HepG2 (cell line): ENCODE measurements at regions of chr2 and their contacts with region 1.

Region 1: GRCh38 chr2:82268446-82268845 is 1963.9 kb upstream of the LRRTM1 start:
- DNase-seq: no peak
- ATAC-seq: no peak
- H3K4me3 ChIP-seq: no peak overlapping the region
- H3K27ac ChIP-seq: no peak overlapping the region
- H3K4me1 ChIP-seq: no peaks in the 10 kb centered on the region
- H3K27me3 ChIP-seq: no peaks in the 10 kb centered on the region
- CTCF ChIP-seq: no peak
- EP300 ChIP-seq: no peak
- POLR2A ChIP-seq: no peak
- RAD21 ChIP-seq: no peak

Region 2: GRCh38 chr2:82109418-82109817 is 159.0 kb before region 1 on chr2:
- CTCF ChIA-PET with region 1: no interaction called
- POLR2A ChIA-PET with region 1: no interaction called
- in situ Hi-C with region 1: no loop called
- intact Hi-C with region 1: no loop called
- DNase-seq: no peak
- ATAC-seq: no peak
- H3K4me3 ChIP-seq: no peak overlapping the region
- H3K27ac ChIP-seq: no peak overlapping the region
- H3K4me1 ChIP-seq: no peaks in the 10 kb centered on the region
- H3K27me3 ChIP-seq: no peaks in the 10 kb centered on the region
- CTCF ChIP-seq: no peak
- EP300 ChIP-seq: no peak
- POLR2A ChIP-seq: no peak
- RAD21 ChIP-seq: no peak

Region 3: DNA sequence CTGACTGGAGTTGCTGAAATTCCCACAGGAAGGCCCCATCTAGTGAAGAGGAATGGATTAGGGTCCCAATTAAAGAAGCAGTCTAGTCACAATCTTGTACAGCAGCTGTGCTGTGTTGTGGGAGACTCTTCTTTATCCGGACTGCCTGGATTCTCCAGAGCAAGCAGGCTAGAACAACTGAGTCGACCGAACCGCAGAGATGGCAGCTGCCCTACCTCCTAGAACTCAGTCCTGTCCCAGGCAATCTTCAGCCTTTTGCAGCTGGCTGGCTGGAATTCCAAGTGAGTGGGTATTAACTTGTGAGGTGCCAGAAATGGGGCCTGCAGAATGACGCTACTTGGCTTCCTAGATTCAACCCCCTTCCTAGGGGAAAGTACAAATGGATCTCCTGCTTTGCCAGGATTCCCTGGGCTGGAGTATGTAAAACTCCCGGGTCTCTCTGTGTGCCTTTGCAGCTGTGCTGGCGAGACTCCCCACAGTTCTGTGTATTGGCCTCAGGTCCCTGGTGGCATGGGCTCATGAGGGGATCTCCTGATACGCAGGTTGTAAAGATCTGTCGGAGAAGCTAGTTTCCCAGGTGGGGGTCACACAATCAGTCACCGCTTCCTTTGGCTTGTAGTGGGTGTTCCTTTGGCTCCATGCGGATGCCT is 11.3 kb before region 1 on chr2:
- CTCF ChIA-PET with region 1: no interaction called
- POLR2A ChIA-PET with region 1: no interaction called
- in situ Hi-C with region 1: no loop called
- intact Hi-C with region 1: no loop called
- DNase-seq: no peak
- ATAC-seq: no peak
- H3K4me3 ChIP-seq: no peak overlapping the region
- H3K27ac ChIP-seq: no peak overlapping the region
- H3K4me1 ChIP-seq: no peaks in the 10 kb centered on the region
- H3K27me3 ChIP-seq: no peaks in the 10 kb centered on the region
- CTCF ChIP-seq: no peak
- EP300 ChIP-seq: no peak
- POLR2A ChIP-seq: no peak
- RAD21 ChIP-seq: no peak

Region 4: GRCh38 chr2:82282111-82282882 is 13.9 kb after region 1 on chr2:
- CTCF ChIA-PET with region 1: no interaction called
- POLR2A ChIA-PET with region 1: no interaction called
- in situ Hi-C with region 1: no loop called
- intact Hi-C with region 1: loop called (anchors 2 kb)
- DNase-seq: peak; percentile 4
- ATAC-seq: peak; percentile 85
- H3K4me3 ChIP-seq: no peak overlapping the region
- H3K27ac ChIP-seq: no peak overlapping the region
- H3K4me1 ChIP-seq: no peaks in the 10 kb centered on the region
- H3K27me3 ChIP-seq: no peaks in the 10 kb centered on the region
- CTCF ChIP-seq: peak; percentile 54
- EP300 ChIP-seq: no peak
- POLR2A ChIP-seq: no peak
- RAD21 ChIP-seq: no peak

Region 5: GRCh38 chr2:82599021-82599420 is 330.6 kb after region 1 on chr2:
- CTCF ChIA-PET with region 1: no interaction called
- POLR2A ChIA-PET with region 1: no interaction called
- in situ Hi-C with region 1: no loop called
- intact Hi-C with region 1: no loop called
- DNase-seq: no peak
- ATAC-seq: no peak
- H3K4me3 ChIP-seq: no peak overlapping the region
- H3K27ac ChIP-seq: no peak overlapping the region
- H3K4me1 ChIP-seq: no peaks in the 10 kb centered on the region
- H3K27me3 ChIP-seq: no peaks in the 10 kb centered on the region
- CTCF ChIP-seq: no peak
- EP300 ChIP-seq: no peak
- POLR2A ChIP-seq: no peak
- RAD21 ChIP-seq: no peak